HepG2 (cell line): ENCODE measurements at regions of chr17 and their contacts with region 1.

Region 1: DNA sequence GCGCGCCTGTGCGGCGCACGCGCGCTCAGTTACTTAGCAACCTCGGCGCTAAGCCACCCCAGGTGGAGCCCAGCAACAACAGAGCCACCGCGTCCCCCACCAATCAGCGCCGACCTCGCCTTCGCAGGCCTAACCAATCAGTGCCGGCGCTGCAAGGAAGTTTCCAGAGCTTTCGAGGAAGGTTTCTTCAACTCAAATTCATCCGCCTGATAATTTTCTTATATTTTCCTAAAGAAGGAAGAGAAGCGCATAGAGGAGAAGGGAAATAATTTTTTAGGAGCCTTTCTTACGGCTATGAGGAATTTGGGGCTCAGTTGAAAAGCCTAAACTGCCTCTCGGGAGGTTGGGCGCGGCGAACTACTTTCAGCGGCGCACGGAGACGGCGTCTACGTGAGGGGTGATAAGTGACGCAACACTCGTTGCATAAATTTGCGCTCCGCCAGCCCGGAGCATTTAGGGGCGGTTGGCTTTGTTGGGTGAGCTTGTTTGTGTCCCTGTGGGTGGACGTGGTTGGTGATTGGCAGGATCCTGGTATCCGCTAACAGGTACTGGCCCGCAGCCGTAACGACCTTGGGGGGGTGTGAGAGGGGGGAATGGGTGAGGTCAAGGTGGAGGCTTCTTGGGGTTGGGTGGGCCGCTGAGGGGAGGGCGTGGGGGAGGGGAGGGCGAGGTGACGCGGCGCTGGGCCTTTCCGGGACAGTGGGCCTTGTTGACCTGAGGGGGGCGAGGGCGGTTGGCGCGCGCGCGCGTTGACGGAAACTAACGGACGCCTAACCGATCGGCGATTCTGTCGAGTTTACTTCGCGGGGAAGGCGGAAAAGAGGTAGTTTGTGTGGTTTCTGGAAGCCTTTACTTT is at the start of gene UBB:
- DNase-seq: peak; percentile 94
- ATAC-seq: peak; percentile 90
- H3K4me3 ChIP-seq: peak within 1 kb of the TSS; percentile 77 to 97 (median 86)
- H3K27ac ChIP-seq: peak within 1 kb of the TSS; percentile 92
- H3K4me1 ChIP-seq: peaks cover 66% of the 10 kb centered on the region
- H3K27me3 ChIP-seq: no peaks in the 10 kb centered on the region; a peak in 1 of 5 replicates
- CTCF ChIP-seq: peak; percentile 52
- EP300 ChIP-seq: peak in 1 of 2 experiments; percentile 79; a peak in 3 of 4 replicates
- POLR2A ChIP-seq: peak; percentile 98 to 99
- RAD21 ChIP-seq: no peak
- total RNA-seq, gene UBB: 2,066 and 2,598 TPM in 2 replicates

Region 2: GRCh38 chr17:16262201-16262600 is 118.7 kb before region 1 on chr17:
- CTCF ChIA-PET with region 1: no interaction called
- POLR2A ChIA-PET with region 1: no interaction called
- in situ Hi-C with region 1: no loop called
- intact Hi-C with region 1: no loop called
- DNase-seq: no peak
- ATAC-seq: no peak
- H3K4me3 ChIP-seq: no peak overlapping the region
- H3K27ac ChIP-seq: no peak overlapping the region
- H3K4me1 ChIP-seq: peaks cover 2% of the 10 kb centered on the region; the same call in 1 of the 2 replicates
- H3K27me3 ChIP-seq: no peaks in the 10 kb centered on the region
- CTCF ChIP-seq: no peak
- EP300 ChIP-seq: no peak
- POLR2A ChIP-seq: no peak
- RAD21 ChIP-seq: no peak

Region 3: GRCh38 chr17:16297367-16298139 is 83.3 kb before region 1 on chr17:
- CTCF ChIA-PET with region 1: no interaction called
- POLR2A ChIA-PET with region 1: interaction called, 18 read pairs
- in situ Hi-C with region 1: no loop called
- intact Hi-C with region 1: no loop called
- DNase-seq: peak; percentile 86
- ATAC-seq: peak; percentile 77
- H3K4me3 ChIP-seq: peak overlapping the region in 2 of 3 experiments; percentile 17 to 42; a peak in 4 of 6 replicates
- H3K27ac ChIP-seq: peak overlapping the region; percentile 97
- H3K4me1 ChIP-seq: peaks cover 78% of the 10 kb centered on the region
- H3K27me3 ChIP-seq: no peaks in the 10 kb centered on the region
- CTCF ChIP-seq: peak; percentile 33; the same call in 1 of the 2 replicates
- EP300 ChIP-seq: peak in 1 of 2 experiments; percentile 38; a peak in 1 of 4 replicates
- POLR2A ChIP-seq: peak; percentile 24 to 75; a peak in 3 of 4 replicates
- RAD21 ChIP-seq: no peak

Region 4: DNA sequence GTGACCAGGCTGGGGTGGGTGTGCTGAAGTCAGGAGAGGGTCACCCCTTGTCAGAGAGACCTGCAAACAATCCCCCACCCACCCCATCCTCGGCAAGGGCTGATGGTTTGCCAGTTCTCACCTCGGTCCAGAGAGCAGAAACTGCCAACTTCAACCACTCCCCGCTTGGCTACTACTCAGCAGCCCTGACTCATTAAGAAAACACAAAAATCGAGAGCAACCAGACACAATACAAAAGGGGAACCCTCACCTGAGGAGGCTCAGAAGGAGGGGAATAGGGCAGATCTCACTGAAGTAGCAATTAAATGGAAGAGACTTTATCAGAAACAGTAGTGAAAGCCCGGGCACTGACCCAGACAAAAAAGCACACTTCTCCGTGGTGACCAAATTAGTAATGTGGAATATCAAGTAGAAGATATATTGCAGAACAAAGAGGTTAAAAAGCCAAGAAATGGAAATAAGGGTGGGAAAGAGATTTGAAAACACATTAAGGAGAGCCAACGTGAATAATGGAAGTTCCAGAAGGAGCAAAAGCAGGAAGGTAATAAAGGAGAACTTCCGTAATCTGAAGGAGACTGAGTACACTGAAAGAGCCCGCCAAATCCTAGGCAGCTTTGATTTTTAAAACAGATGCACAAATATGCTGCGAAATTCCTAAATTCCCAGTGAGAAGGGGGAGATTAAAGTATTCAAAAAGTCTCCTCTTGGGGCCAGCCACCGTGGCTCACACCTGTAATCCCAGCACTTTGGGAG is 51.2 kb before region 1 on chr17:
- CTCF ChIA-PET with region 1: no interaction called
- POLR2A ChIA-PET with region 1: no interaction called
- in situ Hi-C with region 1: no loop called
- intact Hi-C with region 1: no loop called
- DNase-seq: no peak
- ATAC-seq: peak; percentile 65
- H3K4me3 ChIP-seq: no peak overlapping the region
- H3K27ac ChIP-seq: peak overlapping the region; percentile 8
- H3K4me1 ChIP-seq: peaks cover 12% of the 10 kb centered on the region
- H3K27me3 ChIP-seq: no peaks in the 10 kb centered on the region
- CTCF ChIP-seq: no peak
- EP300 ChIP-seq: no peak
- POLR2A ChIP-seq: no peak
- RAD21 ChIP-seq: no peak

Region 5: GRCh38 chr17:16353317-16354174 is 27.3 kb before region 1 on chr17 and contains the start of gene CENPV:
- CTCF ChIA-PET with region 1: no interaction called
- POLR2A ChIA-PET with region 1: interaction called, 16 read pairs
- in situ Hi-C with region 1: no loop called
- intact Hi-C with region 1: no loop called
- DNase-seq: peak; percentile 69
- ATAC-seq: peak; percentile 91
- H3K4me3 ChIP-seq: peak within 1 kb of the TSS; percentile 85 to 89 (median 87)
- H3K27ac ChIP-seq: peak within 1 kb of the TSS; percentile 94
- H3K4me1 ChIP-seq: peaks cover 35% of the 10 kb centered on the region
- H3K27me3 ChIP-seq: no peaks in the 10 kb centered on the region
- CTCF ChIP-seq: peak; percentile 49
- EP300 ChIP-seq: no peak
- POLR2A ChIP-seq: peak; percentile 53 to 76; a peak in 3 of 4 replicates
- RAD21 ChIP-seq: peak; percentile 72
- total RNA-seq, gene CENPV: 216 and 292 TPM in 2 replicates

Region 6: GRCh38 chr17:16415031-16415924 is 34.4 kb after region 1 on chr17 and contains the start of gene TRPV2:
- CTCF ChIA-PET with region 1: interaction called, 10 read pairs
- POLR2A ChIA-PET with region 1: interaction called, 17 read pairs
- in situ Hi-C with region 1: loop called (anchors 5 kb)
- intact Hi-C with region 1: loop called (anchors 2 kb)
- DNase-seq: peak; percentile 59
- ATAC-seq: peak; percentile 84
- H3K4me3 ChIP-seq: peak within 1 kb of the TSS; percentile 62 to 78 (median 74)
- H3K27ac ChIP-seq: peak within 1 kb of the TSS; percentile 64
- H3K4me1 ChIP-seq: peaks cover 53% of the 10 kb centered on the region
- H3K27me3 ChIP-seq: no peaks in the 10 kb centered on the region
- CTCF ChIP-seq: peak; percentile 90
- EP300 ChIP-seq: no peak
- POLR2A ChIP-seq: 0 out of 4 replicates have a peak, but pooled peaks of 1 of the 2 experiments have one; percentile 35
- RAD21 ChIP-seq: peak; percentile 79
- total RNA-seq, gene TRPV2: 7.3 and 13.6 TPM in 2 replicates

Region 7: DNA sequence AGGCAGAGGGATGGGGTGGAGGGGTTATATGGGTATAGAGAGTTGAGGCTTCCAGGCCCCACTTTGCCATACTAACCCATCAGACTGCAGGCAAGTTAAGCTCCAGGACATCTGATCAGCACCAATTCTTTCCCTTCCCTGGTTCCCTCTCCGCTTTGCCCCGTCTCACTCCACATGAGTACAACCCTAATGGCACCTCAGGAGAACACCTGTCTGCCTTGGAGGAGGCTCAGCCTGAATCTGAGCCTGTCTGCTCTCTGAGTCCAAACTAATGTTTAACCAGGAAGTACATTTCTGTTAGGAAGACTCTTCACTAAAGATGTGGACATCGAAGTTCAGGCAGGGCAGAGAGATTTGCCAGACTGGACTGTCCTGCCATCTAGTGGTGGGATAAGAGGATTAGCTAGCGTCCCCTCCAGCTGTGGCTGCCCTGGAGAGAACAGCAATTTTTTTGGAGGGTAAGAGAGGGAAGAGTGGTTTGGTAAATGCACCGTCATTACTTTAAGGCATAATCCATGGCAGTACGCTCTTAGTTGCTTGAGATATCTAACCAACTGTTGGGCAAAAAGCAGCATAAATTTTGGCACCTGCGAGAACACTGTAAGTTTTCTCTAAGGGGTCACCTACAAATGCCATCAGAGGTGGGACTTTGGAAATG is 140.3 kb after region 1 on chr17:
- CTCF ChIA-PET with region 1: no interaction called
- POLR2A ChIA-PET with region 1: interaction called, 4 read pairs
- in situ Hi-C with region 1: no loop called
- intact Hi-C with region 1: loop called (anchors 1 kb)
- DNase-seq: peak; percentile 87
- ATAC-seq: peak; percentile 98
- H3K4me3 ChIP-seq: no peak overlapping the region
- H3K27ac ChIP-seq: no peak overlapping the region
- H3K4me1 ChIP-seq: peaks cover 22% of the 10 kb centered on the region
- H3K27me3 ChIP-seq: peaks cover 0 to 15% of the 10 kb centered on the region in 2 experiments; a peak in 2 of 5 replicates
- CTCF ChIP-seq: peak; percentile 97
- EP300 ChIP-seq: no peak
- POLR2A ChIP-seq: no peak
- RAD21 ChIP-seq: peak; percentile 92